ENCODE measurements at regions of chr12 and their contacts with region 1.

Region 1: GRCh38 chr12:49776413-49776812 is 35.1 kb downstream of the TMBIM6 start:
- DNase-seq: peak; percentile 51 to 59
- ATAC-seq: peak; percentile 73 to 94 (median 88)
- H3K4me3 ChIP-seq: no peak overlapping the region
- H3K27ac ChIP-seq: no peak overlapping the region
- H3K4me1 ChIP-seq: peaks cover 0 to 10% (median 5%) of the 10 kb centered on the region in 9 donors
- H3K27me3 ChIP-seq: no peaks in the 10 kb centered on the region
- CTCF ChIP-seq: peak; percentile 60 to 86 (median 80)

Region 2: DNA sequence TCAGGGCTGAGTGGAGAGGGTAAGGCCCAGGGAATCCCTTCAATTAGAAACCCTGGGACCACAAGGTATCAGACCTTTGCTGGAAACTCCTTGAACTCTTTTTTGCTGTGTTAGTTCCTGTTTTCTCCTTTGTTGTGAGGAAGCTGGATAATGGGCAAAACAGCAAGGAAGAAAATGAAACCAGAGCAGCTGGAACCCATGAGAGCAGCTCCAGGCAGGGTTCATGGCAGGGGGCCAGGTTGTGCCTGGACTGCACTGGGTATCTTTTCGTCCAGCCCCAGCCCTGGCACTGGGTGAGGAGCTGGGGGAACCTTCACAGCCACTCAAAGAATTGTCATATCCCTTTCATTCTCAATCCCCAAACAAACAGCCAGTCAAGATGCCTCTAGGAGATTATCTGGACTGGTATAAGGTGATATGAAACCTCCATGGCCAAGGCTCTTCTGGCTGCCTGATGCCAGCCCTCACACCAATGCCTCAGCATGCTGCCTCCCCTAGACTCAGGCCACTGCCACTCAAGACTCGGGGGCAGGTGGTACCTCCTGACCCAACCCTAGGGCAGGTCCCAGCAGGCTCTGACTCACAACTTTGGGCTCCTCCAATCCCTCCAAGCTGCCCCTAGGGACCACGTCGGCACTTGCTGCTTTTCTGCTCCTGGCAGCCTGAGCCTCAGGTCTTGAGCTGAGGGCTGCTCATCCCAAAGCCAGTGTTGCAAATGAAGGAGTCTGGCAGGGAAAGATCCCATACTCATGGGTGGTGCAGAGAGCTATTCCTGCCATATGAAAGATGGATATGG is 187.5 kb before region 1 on chr12:
- intact Hi-C with region 1: no loop called
- DNase-seq: peak in 1 of 2 donors; percentile 50
- ATAC-seq: peak in 3 of 8 donors; percentile 27 to 55 (median 39)
- H3K4me3 ChIP-seq: no peak overlapping the region
- H3K27ac ChIP-seq: peak overlapping the region in 2 of 10 donors; percentile 18 to 53
- H3K4me1 ChIP-seq: peaks cover 0 to 35% (median 11%) of the 10 kb centered on the region in 9 donors
- H3K27me3 ChIP-seq: no peaks in the 10 kb centered on the region
- CTCF ChIP-seq: no peak

Region 3: DNA sequence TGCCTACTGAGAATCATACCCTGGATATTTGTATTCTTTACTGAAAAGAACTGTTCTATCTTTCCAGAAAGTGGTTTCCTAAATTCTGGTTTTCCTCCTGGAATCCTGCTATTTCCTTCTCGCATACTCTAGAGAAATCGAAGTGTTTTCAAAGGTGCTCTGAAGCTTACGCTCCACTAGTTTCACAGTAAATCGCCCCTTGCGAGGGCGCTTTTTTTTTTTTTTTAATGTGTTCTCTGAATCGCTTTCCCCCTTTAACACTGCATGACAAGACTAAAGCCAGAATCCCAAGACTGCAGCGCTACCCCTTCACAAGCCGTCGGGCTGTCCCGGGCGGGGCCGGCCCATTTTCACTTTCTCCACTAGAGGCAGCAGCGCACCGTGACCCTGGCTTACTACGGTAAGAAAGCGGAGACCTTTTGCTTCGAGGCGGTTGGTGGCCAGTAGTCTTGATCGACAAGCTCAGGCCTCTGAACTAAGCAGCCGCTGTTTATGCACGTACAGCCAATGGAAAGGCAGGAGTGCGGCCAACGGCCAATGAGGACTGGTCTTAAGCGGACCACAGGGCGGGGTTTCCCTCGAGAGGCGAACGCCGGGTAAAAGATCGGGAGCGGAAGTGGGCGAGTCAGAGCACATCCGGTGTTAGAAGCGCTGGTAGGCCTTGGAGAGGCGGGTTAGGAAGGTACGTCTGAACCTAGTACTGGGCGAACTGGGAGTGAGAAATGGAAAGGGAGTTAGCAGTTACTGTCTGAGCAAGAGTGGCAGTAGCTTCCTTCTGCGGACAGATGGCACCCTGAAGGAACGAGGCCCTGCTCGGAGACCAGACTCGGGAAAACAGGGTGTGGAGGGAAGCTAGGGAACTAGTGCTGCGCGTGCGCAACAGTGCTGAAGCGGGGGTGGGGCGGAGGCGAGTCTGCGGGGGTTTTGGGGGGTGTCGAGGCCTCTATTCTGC is 35.2 kb before region 1 on chr12 and contains the start of gene TMBIM6:
- intact Hi-C with region 1: loop called in 1 of 10 experiments (anchors 5 kb)
- DNase-seq: peak; percentile 98 to 99
- ATAC-seq: peak; percentile 97 to 98 (median 98)
- H3K4me3 ChIP-seq: peak within 1 kb of the TSS; percentile 61 to 92 (median 69)
- H3K27ac ChIP-seq: peak within 1 kb of the TSS; percentile 90 to 99 (median 94)
- H3K4me1 ChIP-seq: peaks cover 10 to 45% (median 41%) of the 10 kb centered on the region in 9 donors
- H3K27me3 ChIP-seq: no peaks in the 10 kb centered on the region
- CTCF ChIP-seq: peak; percentile 91 to 100 (median 98)
- total RNA-seq, gene TMBIM6: 174 to 322 (median 202) TPM

Region 4: DNA sequence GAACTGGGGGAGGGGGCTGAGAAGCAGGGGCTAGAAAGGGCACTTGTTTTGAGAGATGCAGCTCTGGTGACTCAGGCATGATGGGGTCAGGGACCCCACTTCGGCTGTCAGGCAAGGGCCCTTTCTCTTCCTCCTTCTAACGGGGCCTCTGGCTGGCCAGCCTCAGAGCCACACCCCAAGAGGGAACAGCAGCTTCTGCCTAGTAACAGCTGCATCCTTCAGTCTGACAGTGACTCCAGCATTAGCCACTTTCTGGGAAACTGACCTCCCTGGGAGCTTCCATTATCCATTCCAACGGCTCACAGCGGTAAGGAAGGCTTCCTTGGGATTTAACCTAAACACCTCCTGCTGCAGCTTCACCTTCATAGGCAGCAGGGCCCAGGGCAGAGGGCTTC is 48.9 kb after region 1 on chr12:
- intact Hi-C with region 1: no loop called
- DNase-seq: no peak
- ATAC-seq: peak in 1 of 8 donors; percentile 6
- H3K4me3 ChIP-seq: peak overlapping the region in 4 of 10 donors; percentile 8 to 90 (median 32)
- H3K27ac ChIP-seq: peak overlapping the region in 9 of 10 donors; percentile 24 to 97 (median 93)
- H3K4me1 ChIP-seq: peaks cover 22 to 82% (median 69%) of the 10 kb centered on the region in 9 donors
- H3K27me3 ChIP-seq: no peaks in the 10 kb centered on the region
- CTCF ChIP-seq: no peak

Region 5: DNA sequence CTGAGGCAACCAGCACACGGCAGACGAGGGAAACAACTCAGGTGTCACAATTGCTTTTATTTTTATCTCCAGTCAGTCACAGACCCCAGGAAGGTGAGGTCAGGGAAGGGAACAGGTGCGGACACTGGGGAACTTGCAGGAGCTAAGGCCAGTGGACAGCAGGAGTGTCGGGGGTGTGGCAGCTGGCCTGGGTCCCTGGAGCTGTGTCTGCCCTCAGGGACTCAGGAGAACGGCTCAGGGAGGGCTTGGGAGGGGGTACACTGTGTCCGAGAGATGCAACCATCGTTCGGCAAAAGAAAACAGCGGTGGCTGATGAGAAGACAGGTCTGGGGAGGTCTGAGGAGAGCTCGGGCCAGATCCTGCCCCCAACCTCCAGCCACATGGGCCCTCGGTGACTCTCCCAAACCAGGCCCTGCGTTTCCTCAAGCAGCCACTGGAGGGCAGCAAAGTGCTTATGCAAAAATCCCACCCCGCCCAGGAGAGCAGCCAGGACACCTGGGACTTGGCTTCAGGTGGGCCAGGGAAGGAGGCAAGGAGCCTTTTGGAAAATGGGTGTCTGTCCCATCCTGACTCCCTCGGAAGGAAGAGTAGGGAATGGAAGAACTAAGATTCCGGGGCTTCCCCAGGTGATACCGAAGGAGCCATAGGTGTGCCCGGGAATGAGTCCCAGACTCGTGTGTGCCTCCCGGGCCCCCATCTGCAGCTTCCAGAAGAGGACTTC is 90.6 kb after region 1 on chr12:
- intact Hi-C with region 1: no loop called
- DNase-seq: peak; percentile 72 to 77
- ATAC-seq: peak in 7 of 8 donors; percentile 4 to 40 (median 20)
- H3K4me3 ChIP-seq: no peak overlapping the region
- H3K27ac ChIP-seq: peak overlapping the region in 1 of 10 donors; percentile 67
- H3K4me1 ChIP-seq: peaks cover 22 to 40% (median 30%) of the 10 kb centered on the region in 9 donors
- H3K27me3 ChIP-seq: peaks cover 0 to 15% (median 6%) of the 10 kb centered on the region in 7 donors
- CTCF ChIP-seq: peak; percentile 95 to 99 (median 97)

Region 6: GRCh38 chr12:49945394-49946080 is 169.1 kb after region 1 on chr12:
- intact Hi-C with region 1: loop called in 1 of 10 experiments (anchors 5 kb)
- DNase-seq: peak; percentile 81 to 87
- ATAC-seq: peak; percentile 94 to 97 (median 96)
- H3K4me3 ChIP-seq: peak overlapping the region in 8 of 10 donors; percentile 13 to 44 (median 36)
- H3K27ac ChIP-seq: peak overlapping the region in 5 of 10 donors; percentile 15 to 65 (median 53)
- H3K4me1 ChIP-seq: peaks cover 0 to 26% (median 10%) of the 10 kb centered on the region in 9 donors
- H3K27me3 ChIP-seq: peaks cover 0 to 12% (median 0%) of the 10 kb centered on the region in 7 donors
- CTCF ChIP-seq: peak; percentile 72 to 97 (median 95)

Region 7: GRCh38 chr12:50055831-50056638 is 279.6 kb after region 1 on chr12:
- intact Hi-C with region 1: loop called in 3 of 10 experiments (anchors 10 kb)
- DNase-seq: peak in 1 of 2 donors; percentile 26
- ATAC-seq: peak in 7 of 8 donors; percentile 44 to 73 (median 61)
- H3K4me3 ChIP-seq: no peak overlapping the region
- H3K27ac ChIP-seq: no peak overlapping the region
- H3K4me1 ChIP-seq: peaks cover 2 to 48% (median 20%) of the 10 kb centered on the region in 9 donors
- H3K27me3 ChIP-seq: peaks cover 0 to 39% (median 19%) of the 10 kb centered on the region in 7 donors
- CTCF ChIP-seq: peak; percentile 80 to 97 (median 95)

Measured in heart right ventricle (tissue), 16 donors.